ENCODE measurements at regions of chr19 and their contacts with region 1.

Region 1: DNA sequence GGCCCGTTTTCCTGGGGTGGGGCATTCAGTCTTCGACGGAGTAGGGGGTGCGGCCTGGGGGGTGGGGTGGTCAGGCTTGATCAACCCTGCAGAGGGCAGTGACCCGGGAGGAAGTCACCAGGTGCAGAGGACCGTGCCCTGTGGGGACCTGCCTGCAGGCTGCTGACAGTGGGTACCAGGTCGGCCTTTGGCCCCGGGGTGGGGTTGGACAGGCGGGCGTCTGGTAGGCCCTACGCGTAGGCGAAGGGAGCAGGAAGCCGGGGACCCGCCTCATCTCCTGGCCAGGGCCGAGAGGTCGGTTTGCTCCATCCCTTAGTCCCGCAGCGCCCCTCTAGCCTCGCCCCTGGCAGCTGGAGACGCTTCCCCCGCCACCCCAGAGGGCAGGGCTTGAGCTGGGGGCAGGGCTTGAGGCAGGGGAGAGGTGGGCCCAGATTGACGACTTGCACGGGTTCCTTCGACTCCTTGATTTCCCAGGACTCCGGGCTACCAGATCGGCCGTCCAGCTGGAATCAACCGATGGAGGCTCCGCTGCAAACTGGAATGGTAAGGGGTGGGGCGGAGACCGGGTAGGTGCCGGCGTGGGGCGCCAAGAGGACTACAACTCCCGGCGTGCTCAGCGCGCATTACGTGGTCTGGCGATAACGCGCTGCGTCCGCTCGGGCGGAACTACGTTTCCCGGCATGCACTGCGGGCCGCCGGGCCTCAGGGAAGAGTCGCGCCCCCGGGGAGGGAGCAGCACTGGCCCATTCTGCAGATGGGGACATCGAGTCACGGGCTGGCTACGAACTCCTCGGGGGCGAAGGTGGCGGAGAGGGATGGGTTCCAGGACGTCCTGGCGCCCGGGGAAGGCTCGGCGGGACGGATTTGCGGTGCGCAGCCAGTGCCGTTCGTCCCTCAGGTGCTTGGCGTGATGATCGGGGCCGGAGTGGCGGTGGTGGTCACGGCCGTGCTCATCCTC is at the start of gene PNPLA6:
- DNase-seq: peak; percentile 95 to 98 (median 97)
- H3K4me3 ChIP-seq: peak within 1 kb of the TSS; percentile 54
- H3K27ac ChIP-seq: peak within 1 kb of the TSS; percentile 76 to 88
- H3K4me1 ChIP-seq: peaks cover 2% of the 10 kb centered on the region
- H3K27me3 ChIP-seq: no peaks in the 10 kb centered on the region
- CTCF ChIP-seq: peak in 1 of 3 donors; percentile 12
- EP300 ChIP-seq: no peak
- POLR2A ChIP-seq: peak; percentile 66
- total RNA-seq, gene PNPLA6: 31.0 to 69.1 (median 60.1) TPM

Region 2: GRCh38 chr19:7104747-7105447 is 430.4 kb before region 1 on chr19:
- intact Hi-C with region 1: loop called in 1 of 4 experiments (anchors 10 kb)
- DNase-seq: no peak
- H3K4me3 ChIP-seq: no peak overlapping the region
- H3K27ac ChIP-seq: no peak overlapping the region
- H3K4me1 ChIP-seq: no peaks in the 10 kb centered on the region
- H3K27me3 ChIP-seq: no peaks in the 10 kb centered on the region
- CTCF ChIP-seq: no peak
- EP300 ChIP-seq: no peak
- POLR2A ChIP-seq: no peak

Region 3: DNA sequence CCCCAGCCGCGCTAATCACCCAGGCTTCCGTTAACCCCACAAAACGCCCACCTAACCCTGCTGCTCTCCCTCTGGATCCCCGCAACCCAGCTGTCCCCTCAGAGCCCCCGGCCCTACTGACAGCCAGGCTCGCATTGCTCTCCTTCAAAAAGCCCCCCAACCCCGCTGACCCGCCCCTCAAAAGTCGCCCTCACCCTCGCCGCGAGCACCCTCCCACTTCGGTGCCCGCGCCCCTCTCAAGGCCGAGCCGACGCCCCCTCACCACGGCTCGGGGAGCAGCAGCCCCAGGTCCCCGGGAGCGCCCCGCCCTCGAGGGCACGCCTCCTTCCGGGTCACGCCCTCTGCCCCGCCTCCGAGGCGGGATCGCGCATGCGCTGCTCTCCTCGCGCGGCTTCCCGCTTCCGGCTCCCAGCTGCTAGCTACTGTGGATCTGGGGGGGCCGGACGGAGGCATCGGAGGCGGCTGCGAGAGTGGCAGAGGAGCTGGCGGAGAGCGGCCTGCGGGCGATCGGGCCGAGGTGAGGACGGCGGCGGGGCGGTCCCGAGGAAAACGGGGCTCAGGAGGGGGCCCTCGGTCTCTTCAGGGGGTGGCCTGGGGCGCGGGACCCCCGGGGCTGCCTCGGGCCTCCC is 140.5 kb before region 1 on chr19:
- intact Hi-C with region 1: loop called in 2 of 4 experiments (anchors 10 kb)
- DNase-seq: peak; percentile 84 to 97 (median 91)
- H3K4me3 ChIP-seq: peak overlapping the region; percentile 94
- H3K27ac ChIP-seq: peak overlapping the region in 1 of 2 donors; percentile 49
- H3K4me1 ChIP-seq: peaks cover 4% of the 10 kb centered on the region
- H3K27me3 ChIP-seq: no peaks in the 10 kb centered on the region
- CTCF ChIP-seq: peak in 1 of 3 donors; percentile 9
- EP300 ChIP-seq: no peak
- POLR2A ChIP-seq: peak; percentile 25

Region 4: GRCh38 chr19:7488736-7489353 is 46.5 kb before region 1 on chr19 and contains the start of gene PEX11G:
- intact Hi-C with region 1: loop called in 3 of 4 experiments (anchors 2 to 5 kb)
- DNase-seq: peak; percentile 90 to 97 (median 95)
- H3K4me3 ChIP-seq: peak within 1 kb of the TSS; percentile 51
- H3K27ac ChIP-seq: peak within 1 kb of the TSS; percentile 90 to 94
- H3K4me1 ChIP-seq: peaks cover 6% of the 10 kb centered on the region
- H3K27me3 ChIP-seq: no peaks in the 10 kb centered on the region
- CTCF ChIP-seq: peak in 1 of 3 donors; percentile 39
- EP300 ChIP-seq: no peak
- POLR2A ChIP-seq: peak; percentile 93
- total RNA-seq, gene PEX11G: 2.8 to 5.1 (median 3.7) TPM